ENCODE measurements at regions of chr13 and their contacts with region 1.

Region 1: GRCh38 chr13:24230428-24231072 is 70.0 kb downstream of the SPATA13 start:
- DNase-seq: no peak
- H3K4me3 ChIP-seq: no peak overlapping the region
- H3K27ac ChIP-seq: no peak overlapping the region
- H3K4me1 ChIP-seq: peaks cover 17% of the 10 kb centered on the region
- H3K27me3 ChIP-seq: no peaks in the 10 kb centered on the region
- CTCF ChIP-seq: no peak

Region 2: DNA sequence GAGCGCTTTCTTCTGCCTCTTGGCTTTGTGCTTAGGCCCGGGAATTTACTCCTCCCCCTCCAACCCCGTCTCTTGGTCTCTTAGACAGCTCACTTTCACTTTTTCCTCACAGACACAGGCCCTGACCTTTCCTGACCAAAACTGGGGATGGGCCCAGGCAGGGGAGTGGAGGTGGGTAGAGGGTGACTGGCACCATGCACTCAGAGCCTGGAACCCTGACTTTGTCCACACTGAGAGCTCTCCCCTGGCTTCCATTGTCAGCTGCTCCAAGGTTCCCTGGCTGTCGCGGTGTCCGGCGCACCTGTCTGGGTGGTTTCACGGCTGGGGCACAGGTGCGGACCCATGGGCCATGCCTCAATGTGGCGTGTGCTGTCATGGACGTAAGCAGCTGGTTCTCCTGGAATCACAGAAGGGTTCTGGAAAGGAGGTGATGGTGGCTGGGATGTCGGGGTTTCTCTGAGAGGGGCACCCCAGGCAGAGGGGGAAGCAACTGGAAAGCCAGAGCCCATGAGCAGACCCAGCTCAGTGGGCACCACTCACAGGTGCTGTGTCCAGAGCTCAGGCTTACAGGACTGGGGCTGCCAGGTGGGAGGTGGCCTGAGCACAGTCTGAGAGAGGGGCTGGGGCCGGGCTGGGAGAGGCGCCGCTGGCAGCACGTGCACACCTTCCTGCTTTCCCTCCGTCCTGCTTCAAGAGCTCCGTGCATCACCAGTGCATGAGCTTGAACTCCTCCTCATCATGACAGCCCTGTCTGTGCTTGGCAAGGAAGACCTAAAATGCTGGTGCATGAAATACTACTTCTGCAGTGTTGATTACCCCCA is 50.8 kb after region 1 on chr13:
- intact Hi-C with region 1: loop called (anchors 2 kb)
- DNase-seq: no peak
- H3K4me3 ChIP-seq: no peak overlapping the region
- H3K27ac ChIP-seq: no peak overlapping the region
- H3K4me1 ChIP-seq: peaks cover 28% of the 10 kb centered on the region
- H3K27me3 ChIP-seq: no peaks in the 10 kb centered on the region
- CTCF ChIP-seq: no peak